ENCODE measurements at regions of chr11 and their contacts with region 1.

Region 1: DNA sequence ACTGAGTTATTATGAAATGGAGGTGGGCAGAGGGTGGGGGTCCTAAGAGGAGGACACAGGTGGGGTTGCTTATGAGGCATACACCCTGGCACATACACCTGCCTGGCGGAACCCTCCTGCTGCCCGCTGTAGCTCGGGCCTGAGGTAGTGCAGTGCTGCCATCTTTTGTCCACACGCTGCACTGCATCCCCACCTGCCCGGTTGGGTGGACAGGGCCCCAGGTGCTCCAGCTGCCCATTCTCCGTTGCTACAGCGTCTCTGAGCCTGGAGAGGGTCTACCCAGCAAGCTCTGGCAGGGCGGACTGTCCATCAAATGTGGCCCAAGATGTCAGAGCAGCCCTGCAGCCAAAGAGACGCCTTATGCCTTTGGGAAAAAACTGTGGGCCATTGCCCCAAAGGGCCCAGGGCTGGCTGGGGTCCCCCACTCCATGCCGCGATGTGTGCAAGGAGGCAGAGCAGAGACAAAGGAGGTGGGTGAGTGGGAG is 131.2 kb downstream of the BUD13 start:
- H3K4me3 ChIP-seq: no peak overlapping the region
- H3K27ac ChIP-seq: no peak overlapping the region
- H3K4me1 ChIP-seq: no peaks in the 10 kb centered on the region
- CTCF ChIP-seq: peak; percentile 72

Region 2: DNA sequence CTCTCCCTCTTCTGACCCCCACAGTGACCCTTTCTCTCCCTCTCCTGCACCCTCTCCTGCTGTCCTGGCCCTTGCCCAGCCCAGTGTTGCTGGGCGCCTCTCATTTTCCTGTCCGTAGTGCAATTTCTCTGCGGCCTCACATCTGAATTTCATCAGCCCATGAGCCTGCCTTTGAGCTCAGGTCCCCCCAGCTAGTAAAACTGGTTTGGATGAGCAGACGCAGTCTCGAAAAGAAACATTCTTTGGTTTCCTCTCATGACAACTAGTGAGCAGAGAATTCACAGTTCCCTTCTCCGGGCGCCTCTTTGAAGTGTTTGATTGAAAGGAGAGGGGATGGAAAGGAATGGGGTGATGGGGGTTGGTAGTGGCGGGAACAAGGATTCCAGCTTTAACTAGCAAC is 1011.4 kb before region 1 on chr11:
- CTCF ChIA-PET with region 1: no interaction called
- POLR2A ChIA-PET with region 1: no interaction called
- H3K4me3 ChIP-seq: no peak overlapping the region
- H3K27ac ChIP-seq: no peak overlapping the region
- H3K4me1 ChIP-seq: no peaks in the 10 kb centered on the region; the same call in 1 of the 2 replicates
- CTCF ChIP-seq: no peak

Region 3: DNA sequence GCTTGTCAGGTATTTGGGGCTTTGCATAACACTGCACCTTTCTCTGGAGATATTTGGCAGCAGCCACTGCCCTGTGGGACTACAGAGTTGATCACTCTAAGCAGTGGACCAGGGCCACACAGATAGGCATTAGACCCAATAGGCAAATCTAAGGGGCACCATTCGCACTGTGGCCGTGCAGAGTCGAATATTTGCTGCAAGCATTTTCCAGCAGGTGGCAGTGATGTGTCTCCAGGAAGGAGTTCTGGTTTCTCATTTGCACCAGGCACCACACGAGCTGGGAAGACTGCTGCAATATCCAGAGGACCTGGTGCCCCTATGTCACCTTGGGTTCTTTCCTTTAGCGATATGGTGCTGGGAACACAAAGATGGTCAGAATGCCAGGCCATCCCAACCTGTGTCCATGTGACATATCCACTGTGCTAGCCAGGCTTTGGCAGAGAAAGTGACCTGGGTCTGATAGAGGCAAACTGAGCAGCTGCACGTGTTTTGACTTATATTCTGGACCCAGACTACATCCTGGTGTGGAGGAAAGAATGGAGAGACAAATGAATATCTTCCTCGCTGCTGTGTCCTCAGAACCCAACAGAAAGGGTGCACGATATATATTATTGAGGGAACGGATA is 187.5 kb before region 1 on chr11:
- CTCF ChIA-PET with region 1: interaction called, 19 read pairs
- POLR2A ChIA-PET with region 1: no interaction called
- H3K4me3 ChIP-seq: no peak overlapping the region
- H3K27ac ChIP-seq: no peak overlapping the region
- H3K4me1 ChIP-seq: peaks cover 1% of the 10 kb centered on the region
- CTCF ChIP-seq: no peak

Region 4: GRCh38 chr11:116631201-116631600 is 10.4 kb before region 1 on chr11:
- CTCF ChIA-PET with region 1: interaction called, 13 read pairs
- POLR2A ChIA-PET with region 1: no interaction called
- H3K4me3 ChIP-seq: no peak overlapping the region
- H3K27ac ChIP-seq: no peak overlapping the region
- H3K4me1 ChIP-seq: no peaks in the 10 kb centered on the region
- CTCF ChIP-seq: no peak

Region 5: DNA sequence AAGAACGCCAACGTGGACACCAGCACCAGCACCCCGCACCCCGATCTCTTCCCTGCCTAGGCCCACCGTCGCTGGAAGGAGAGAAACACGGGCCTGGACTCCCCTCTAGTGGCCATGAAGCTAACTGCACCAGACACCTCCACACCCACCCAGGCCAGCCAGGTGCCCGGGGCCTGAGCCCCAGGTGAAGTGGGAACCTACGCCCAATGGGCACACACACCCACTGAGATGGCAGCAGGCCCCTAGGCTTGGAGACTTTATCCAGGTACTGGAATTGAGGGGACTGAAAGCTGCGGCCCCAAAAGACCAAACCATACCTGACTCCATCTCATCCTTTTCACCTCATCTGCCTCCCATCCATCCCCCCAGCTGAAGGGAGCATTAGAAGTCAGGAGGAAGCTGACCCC is 50.2 kb after region 1 on chr11:
- CTCF ChIA-PET with region 1: interaction called, 14 read pairs
- POLR2A ChIA-PET with region 1: no interaction called
- H3K4me3 ChIP-seq: no peak overlapping the region
- H3K27ac ChIP-seq: no peak overlapping the region
- H3K4me1 ChIP-seq: no peaks in the 10 kb centered on the region
- CTCF ChIP-seq: peak; percentile 55; the same call in 1 of the 2 replicates

Region 6: GRCh38 chr11:116750070-116750718 is 108.6 kb after region 1 on chr11:
- CTCF ChIA-PET with region 1: no interaction called
- POLR2A ChIA-PET with region 1: no interaction called
- H3K4me3 ChIP-seq: no peak overlapping the region
- H3K27ac ChIP-seq: no peak overlapping the region
- H3K4me1 ChIP-seq: no peaks in the 10 kb centered on the region
- CTCF ChIP-seq: no peak